HCT116 (cell line): ENCODE measurements at regions of chr2 and their contacts with region 1.

Region 1: GRCh38 chr2:17540093-17540812 is at the start of gene VSNL1:
- DNase-seq: peak; percentile 79
- ATAC-seq: peak; percentile 70
- H3K4me3 ChIP-seq: peak within 1 kb of the TSS; percentile 47 to 65
- H3K27ac ChIP-seq: peak within 1 kb of the TSS; percentile 58
- H3K4me1 ChIP-seq: peaks cover 10 to 57% of the 10 kb centered on the region in 2 experiments; a peak in 3 of 4 replicates
- H3K27me3 ChIP-seq: no peaks in the 10 kb centered on the region; the same call in 1 of the 2 replicates
- CTCF ChIP-seq: no peak
- POLR2A ChIP-seq: no peak
- RAD21 ChIP-seq: no peak
- total RNA-seq, gene VSNL1: 4.6 TPM

Region 2: DNA sequence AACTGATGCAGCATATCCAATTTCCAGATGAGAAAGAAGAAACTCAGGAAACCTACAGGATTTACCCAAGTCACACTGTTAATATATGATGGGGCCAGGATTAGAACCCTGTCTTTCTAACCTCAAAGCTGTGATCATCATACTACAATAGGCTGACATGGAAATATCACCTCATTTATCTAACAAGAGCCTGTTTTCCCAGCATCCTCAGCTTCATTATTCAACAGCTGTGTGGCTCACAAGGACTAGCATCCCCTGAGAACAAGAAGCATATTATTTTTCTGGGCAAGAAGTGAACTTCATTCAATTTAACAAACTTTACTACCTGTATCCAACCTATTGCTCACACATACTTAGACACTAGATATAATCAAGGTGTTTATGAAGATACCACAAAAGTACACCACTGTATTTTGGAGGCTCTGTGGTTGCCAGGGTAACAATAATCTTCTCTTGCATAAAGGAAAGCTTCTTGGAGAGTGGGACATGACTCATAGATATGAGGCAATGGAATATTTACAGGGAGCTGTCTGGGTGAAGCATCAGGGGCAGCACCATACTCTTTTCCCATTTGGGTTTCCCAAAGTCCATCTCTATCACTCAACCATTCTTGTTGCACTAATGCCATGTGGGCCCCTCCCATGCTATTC is 240.2 kb before region 1 on chr2:
- CTCF ChIA-PET with region 1: no interaction called
- POLR2A ChIA-PET with region 1: no interaction called
- RAD21 ChIA-PET with region 1: no interaction called
- intact Hi-C with region 1: no loop called
- DNase-seq: no peak
- ATAC-seq: no peak
- H3K4me3 ChIP-seq: no peak overlapping the region
- H3K27ac ChIP-seq: no peak overlapping the region
- H3K4me1 ChIP-seq: peaks cover 0 to 13% of the 10 kb centered on the region in 2 experiments; a peak in 1 of 4 replicates
- H3K27me3 ChIP-seq: no peaks in the 10 kb centered on the region
- CTCF ChIP-seq: no peak
- POLR2A ChIP-seq: no peak
- RAD21 ChIP-seq: no peak

Region 3: GRCh38 chr2:17646081-17646554 is 105.9 kb after region 1 on chr2:
- CTCF ChIA-PET with region 1: no interaction called
- POLR2A ChIA-PET with region 1: no interaction called
- RAD21 ChIA-PET with region 1: no interaction called
- intact Hi-C with region 1: loop called (anchors 2 kb)
- DNase-seq: peak; percentile 44
- ATAC-seq: peak; percentile 47
- H3K4me3 ChIP-seq: no peak overlapping the region
- H3K27ac ChIP-seq: no peak overlapping the region
- H3K4me1 ChIP-seq: peaks cover 6 to 39% of the 10 kb centered on the region in 2 experiments
- H3K27me3 ChIP-seq: no peaks in the 10 kb centered on the region
- CTCF ChIP-seq: peak; percentile 55 to 88 (median 74); a peak in 5 of 6 replicates
- POLR2A ChIP-seq: no peak
- RAD21 ChIP-seq: peak; percentile 70

Region 4: GRCh38 chr2:17757321-17757720 is 217.1 kb after region 1 on chr2:
- CTCF ChIA-PET with region 1: no interaction called
- POLR2A ChIA-PET with region 1: no interaction called
- RAD21 ChIA-PET with region 1: no interaction called
- intact Hi-C with region 1: no loop called
- DNase-seq: no peak
- ATAC-seq: no peak
- H3K4me3 ChIP-seq: no peak overlapping the region
- H3K27ac ChIP-seq: no peak overlapping the region
- H3K4me1 ChIP-seq: peaks cover 4 to 14% of the 10 kb centered on the region in 2 experiments; a peak in 3 of 4 replicates
- H3K27me3 ChIP-seq: no peaks in the 10 kb centered on the region
- CTCF ChIP-seq: no peak
- POLR2A ChIP-seq: no peak
- RAD21 ChIP-seq: no peak